CD8-positive, alpha-beta T cell (primary cell): ENCODE measurements at regions of chr1 and their contacts with region 1.

Region 1: GRCh38 chr1:228139944-228140656 is at the start of gene GUK1:
- DNase-seq: peak; percentile 100
- ATAC-seq: peak; percentile 88
- H3K4me3 ChIP-seq: peak within 1 kb of the TSS; percentile 91 to 99
- H3K4me3 Mint-ChIP-seq: peak within 1 kb of the TSS; percentile 94
- H3K27ac ChIP-seq: peak within 1 kb of the TSS; percentile 97 to 99
- H3K27ac Mint-ChIP-seq: peak within 1 kb of the TSS; percentile 99
- H3K4me1 ChIP-seq: peaks cover 47% of the 10 kb centered on the region
- H3K4me1 Mint-ChIP-seq: peaks cover 63% of the 10 kb centered on the region
- H3K27me3 ChIP-seq: no peaks in the 10 kb centered on the region
- H3K27me3 Mint-ChIP-seq: no peaks in the 10 kb centered on the region
- CTCF ChIP-seq: no peak
- total RNA-seq, gene GUK1: 548 to 551 TPM

Region 2: DNA sequence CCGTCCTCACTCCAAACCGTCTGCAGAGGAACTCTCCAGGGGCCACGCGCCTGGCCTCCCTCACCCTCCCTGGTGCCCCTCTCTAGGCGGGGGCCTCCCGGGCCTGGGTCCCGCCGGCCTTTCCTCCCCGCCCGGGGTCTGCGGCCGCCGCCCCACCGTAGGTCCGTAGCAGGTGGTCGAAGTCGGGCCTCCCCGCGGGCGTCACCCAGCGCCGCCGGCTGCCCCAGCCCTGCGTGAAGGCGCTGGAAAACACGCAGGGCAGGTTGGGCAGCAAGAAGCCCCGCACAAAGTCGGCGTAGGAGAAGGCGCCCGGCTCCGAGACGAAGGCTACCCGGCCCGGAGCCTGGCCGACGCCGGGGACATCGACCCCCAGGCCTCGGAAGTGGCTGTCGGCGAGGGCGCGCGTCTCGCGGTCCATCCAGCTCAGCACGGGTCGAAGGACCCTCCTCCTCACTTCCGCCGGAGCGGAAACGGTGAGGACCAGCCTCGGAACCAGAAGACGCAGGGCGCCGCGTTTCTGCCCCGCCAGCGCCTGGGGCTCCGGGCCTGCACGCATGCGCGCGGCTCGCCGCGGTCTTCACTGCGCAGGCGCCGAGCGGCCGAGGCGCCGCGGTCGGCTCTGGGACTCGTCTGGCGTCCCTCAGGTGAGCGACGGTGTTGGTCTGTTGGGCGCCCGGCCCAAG is 405.1 kb before region 1 on chr1 and contains the starts of genes JMJD4 and SNAP47:
- CTCF ChIA-PET with region 1: no interaction called
- POLR2A ChIA-PET with region 1: no interaction called
- intact Hi-C with region 1: loop called in 1 of 2 experiments (anchors 10 kb)
- DNase-seq: peak; percentile 82 to 97 (median 92)
- ATAC-seq: peak; percentile 89
- H3K4me3 ChIP-seq: peak within 1 kb of the TSS; percentile 71 to 95
- H3K4me3 Mint-ChIP-seq: peak within 1 kb of the TSS; percentile 89
- H3K27ac ChIP-seq: peak within 1 kb of the TSS; percentile 71 to 76
- H3K27ac Mint-ChIP-seq: peak within 1 kb of the TSS; percentile 88
- H3K4me1 ChIP-seq: peaks cover 19% of the 10 kb centered on the region
- H3K4me1 Mint-ChIP-seq: peaks cover 51% of the 10 kb centered on the region
- H3K27me3 ChIP-seq: no peaks in the 10 kb centered on the region
- H3K27me3 Mint-ChIP-seq: no peaks in the 10 kb centered on the region
- CTCF ChIP-seq: no peak
- total RNA-seq, gene JMJD4: 7.4 to 9.5 TPM
- total RNA-seq, gene SNAP47: 11.0 to 13.8 TPM

Region 3: GRCh38 chr1:228109073-228109961 is 30.8 kb before region 1 on chr1 and contains the start of gene MRPL55:
- CTCF ChIA-PET with region 1: interaction called, 3 read pairs
- POLR2A ChIA-PET with region 1: interaction called, 8 read pairs
- intact Hi-C with region 1: loop called (anchors 1 kb)
- DNase-seq: peak; percentile 97 to 100 (median 98)
- ATAC-seq: peak; percentile 97
- H3K4me3 ChIP-seq: peak within 1 kb of the TSS; percentile 93 to 98
- H3K4me3 Mint-ChIP-seq: peak within 1 kb of the TSS; percentile 95
- H3K27ac ChIP-seq: peak within 1 kb of the TSS; percentile 90 to 94
- H3K27ac Mint-ChIP-seq: peak within 1 kb of the TSS; percentile 96
- H3K4me1 ChIP-seq: peaks cover 21% of the 10 kb centered on the region
- H3K4me1 Mint-ChIP-seq: peaks cover 26% of the 10 kb centered on the region
- H3K27me3 ChIP-seq: no peaks in the 10 kb centered on the region
- H3K27me3 Mint-ChIP-seq: no peaks in the 10 kb centered on the region
- CTCF ChIP-seq: no peak
- total RNA-seq, gene MRPL55: 90.2 to 90.7 TPM

Region 4: GRCh38 chr1:228212966-228213844 is 73.1 kb after region 1 on chr1:
- CTCF ChIA-PET with region 1: no interaction called
- POLR2A ChIA-PET with region 1: no interaction called
- intact Hi-C with region 1: loop called (anchors 1 kb)
- DNase-seq: peak; percentile 86 to 93 (median 92)
- ATAC-seq: peak; percentile 89
- H3K4me3 ChIP-seq: peak overlapping the region; percentile 61 to 76
- H3K4me3 Mint-ChIP-seq: peak overlapping the region; percentile 90
- H3K27ac ChIP-seq: peak overlapping the region; percentile 36 to 55
- H3K27ac Mint-ChIP-seq: peak overlapping the region; percentile 93
- H3K4me1 ChIP-seq: peaks cover 13% of the 10 kb centered on the region
- H3K4me1 Mint-ChIP-seq: peaks cover 11% of the 10 kb centered on the region
- H3K27me3 ChIP-seq: peaks cover 0 to 2% of the 10 kb centered on the region in 2 experiments
- H3K27me3 Mint-ChIP-seq: no peaks in the 10 kb centered on the region
- CTCF ChIP-seq: peak; percentile 24

Region 5: GRCh38 chr1:228457396-228458176 is 317.5 kb after region 1 on chr1:
- CTCF ChIA-PET with region 1: no interaction called
- POLR2A ChIA-PET with region 1: interaction called, 4 read pairs
- intact Hi-C with region 1: loop called in 1 of 2 experiments (anchors 1 kb)
- DNase-seq: peak; percentile 68 to 98 (median 80)
- ATAC-seq: peak; percentile 85
- H3K4me3 ChIP-seq: peak overlapping the region; percentile 69 to 91
- H3K4me3 Mint-ChIP-seq: peak overlapping the region; percentile 93
- H3K27ac ChIP-seq: peak overlapping the region; percentile 91 to 93
- H3K27ac Mint-ChIP-seq: peak overlapping the region; percentile 99
- H3K4me1 ChIP-seq: peaks cover 23% of the 10 kb centered on the region
- H3K4me1 Mint-ChIP-seq: peaks cover 39% of the 10 kb centered on the region
- H3K27me3 ChIP-seq: no peaks in the 10 kb centered on the region
- H3K27me3 Mint-ChIP-seq: peaks cover 4% of the 10 kb centered on the region
- CTCF ChIP-seq: peak; percentile 31